CD4-positive, alpha-beta memory T cell (primary cell): ENCODE measurements at regions of chr7 and their contacts with region 1.

Region 1: GRCh38 chr7:99374103-99375064 is at the start of gene ARPC1B:
- DNase-seq: peak; percentile 81 to 88 (median 81)
- H3K4me3 ChIP-seq: peak within 1 kb of the TSS; percentile 73 to 82
- H3K4me3 Mint-ChIP-seq: peak within 1 kb of the TSS; percentile 79 to 87 (median 81)
- H3K27ac ChIP-seq: peak within 1 kb of the TSS; percentile 87
- H3K27ac Mint-ChIP-seq: peak within 1 kb of the TSS; percentile 87 to 100 (median 98)
- H3K4me1 ChIP-seq: peaks cover 44% of the 10 kb centered on the region
- H3K4me1 Mint-ChIP-seq: peaks cover 13 to 42% (median 25%) of the 10 kb centered on the region in 4 donors
- H3K27me3 ChIP-seq: no peaks in the 10 kb centered on the region
- H3K27me3 Mint-ChIP-seq: no peaks in the 10 kb centered on the region
- total RNA-seq, gene ARPC1B: 188 to 191 TPM

Region 2: DNA sequence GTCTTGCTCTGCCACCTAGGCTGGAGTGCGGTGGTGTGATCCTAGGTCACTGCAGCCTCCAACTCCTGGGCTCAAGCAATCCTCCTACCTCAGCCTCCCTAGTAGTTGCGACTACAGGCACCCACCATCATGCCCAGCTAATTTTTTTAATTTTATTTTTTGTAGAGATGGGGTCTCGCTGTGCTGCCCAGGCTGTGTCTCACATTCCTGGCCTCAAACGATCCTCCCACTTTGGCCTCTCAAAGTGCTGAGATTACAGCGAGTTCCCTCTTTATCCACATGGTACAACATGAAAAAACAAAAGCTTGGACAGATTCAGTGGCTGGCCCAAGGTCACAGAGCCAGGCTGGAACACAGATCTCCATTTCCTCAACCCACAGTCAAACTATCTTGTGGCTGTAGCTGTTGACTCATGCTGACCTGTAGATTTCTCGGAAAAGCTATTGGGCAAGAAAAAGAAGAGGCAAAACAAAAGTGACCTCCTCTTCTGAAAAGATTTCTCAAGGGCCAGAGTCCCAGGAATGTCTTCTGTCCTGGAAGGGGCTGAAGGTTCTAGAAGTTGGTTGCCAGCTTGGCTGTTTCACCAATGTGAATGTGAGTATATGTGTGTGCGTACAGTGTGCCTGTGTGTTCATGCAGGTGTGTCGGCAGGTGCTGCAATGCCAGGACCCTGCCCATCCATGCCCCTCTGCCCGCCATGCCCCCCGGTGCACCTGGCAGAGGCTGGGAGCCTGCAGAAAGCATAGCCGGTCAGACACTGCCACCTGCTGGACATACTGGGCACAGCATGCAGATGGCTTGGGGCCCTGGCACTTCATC is 533.0 kb before region 1 on chr7:
- CTCF ChIA-PET with region 1: no interaction called
- POLR2A ChIA-PET with region 1: no interaction called
- intact Hi-C with region 1: no loop called
- DNase-seq: peak; percentile 38 to 57 (median 46)
- H3K4me3 ChIP-seq: no peak overlapping the region
- H3K4me3 Mint-ChIP-seq: no peak overlapping the region
- H3K27ac ChIP-seq: no peak overlapping the region
- H3K27ac Mint-ChIP-seq: no peak overlapping the region
- H3K4me1 ChIP-seq: no peaks in the 10 kb centered on the region
- H3K4me1 Mint-ChIP-seq: peaks cover 0 to 5% (median 0%) of the 10 kb centered on the region in 4 donors
- H3K27me3 ChIP-seq: no peaks in the 10 kb centered on the region
- H3K27me3 Mint-ChIP-seq: peaks cover 2 to 8% of the 10 kb centered on the region in 2 donors

Region 3: DNA sequence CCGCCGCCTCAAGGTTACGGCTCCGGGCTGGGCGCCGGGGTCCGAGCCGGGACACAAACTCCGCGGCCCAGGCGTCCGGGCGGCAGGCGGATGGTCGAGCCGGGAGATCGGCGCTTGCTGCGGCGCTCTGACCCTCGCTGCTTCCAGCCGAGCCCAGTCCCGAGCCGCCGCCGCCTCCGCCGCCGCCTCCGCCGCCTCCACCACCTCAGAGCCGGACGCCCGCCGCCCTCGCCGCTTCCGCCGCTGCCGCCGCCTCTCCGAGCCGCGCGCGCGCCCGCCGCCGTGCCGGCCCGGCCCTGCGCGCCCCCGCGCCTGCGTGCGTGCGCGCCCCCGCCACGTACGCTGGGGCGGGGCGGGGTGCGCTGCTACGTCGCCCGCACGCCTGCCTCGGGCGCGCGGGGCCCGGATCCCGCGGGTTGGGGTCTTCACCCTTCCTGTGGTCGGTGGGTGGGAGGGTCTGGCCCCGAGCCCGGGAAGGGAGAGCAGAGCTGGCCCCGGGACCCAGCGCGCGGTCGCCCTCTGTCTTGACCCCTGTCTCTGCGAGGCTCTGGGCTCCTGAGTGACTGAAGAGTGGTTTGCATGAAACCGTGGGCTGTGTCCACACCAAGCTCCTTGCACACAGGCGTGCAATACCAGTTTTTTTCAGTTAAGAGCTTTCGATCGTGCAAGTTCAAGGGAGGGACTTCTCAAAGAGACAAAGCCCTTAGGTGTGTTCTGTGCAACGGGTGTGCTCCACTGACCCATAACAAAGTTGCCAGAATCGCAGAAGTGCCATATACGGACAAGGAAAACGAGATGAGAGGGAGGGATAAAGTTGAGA is 230.3 kb before region 1 on chr7 and contains the start of gene SMURF1:
- CTCF ChIA-PET with region 1: no interaction called
- POLR2A ChIA-PET with region 1: no interaction called
- intact Hi-C with region 1: loop called (anchors 5 kb)
- DNase-seq: peak; percentile 64 to 87 (median 77)
- H3K4me3 ChIP-seq: peak within 1 kb of the TSS; percentile 55 to 94
- H3K4me3 Mint-ChIP-seq: peak within 1 kb of the TSS; percentile 93 to 99 (median 96)
- H3K27ac ChIP-seq: peak within 1 kb of the TSS; percentile 80
- H3K27ac Mint-ChIP-seq: peak within 1 kb of the TSS; percentile 94 to 99 (median 97)
- H3K4me1 ChIP-seq: peaks cover 25% of the 10 kb centered on the region
- H3K4me1 Mint-ChIP-seq: peaks cover 20 to 52% (median 36%) of the 10 kb centered on the region in 4 donors
- H3K27me3 ChIP-seq: no peaks in the 10 kb centered on the region
- H3K27me3 Mint-ChIP-seq: no peaks in the 10 kb centered on the region
- total RNA-seq, gene SMURF1: 21.4 to 23.2 TPM

Region 4: GRCh38 chr7:99386584-99387238 is 12.3 kb after region 1 on chr7:
- CTCF ChIA-PET with region 1: interaction called, 7 read pairs
- POLR2A ChIA-PET with region 1: interaction called, 55 read pairs
- intact Hi-C with region 1: no loop called
- DNase-seq: peak; percentile 34 to 65 (median 47)
- H3K4me3 ChIP-seq: no peak overlapping the region
- H3K4me3 Mint-ChIP-seq: peak overlapping the region in 1 of 8 donors; percentile 59
- H3K27ac ChIP-seq: no peak overlapping the region
- H3K27ac Mint-ChIP-seq: peak overlapping the region; percentile 35 to 84 (median 75)
- H3K4me1 ChIP-seq: peaks cover 32% of the 10 kb centered on the region
- H3K4me1 Mint-ChIP-seq: peaks cover 4 to 40% (median 18%) of the 10 kb centered on the region in 4 donors
- H3K27me3 ChIP-seq: no peaks in the 10 kb centered on the region
- H3K27me3 Mint-ChIP-seq: no peaks in the 10 kb centered on the region

Region 5: DNA sequence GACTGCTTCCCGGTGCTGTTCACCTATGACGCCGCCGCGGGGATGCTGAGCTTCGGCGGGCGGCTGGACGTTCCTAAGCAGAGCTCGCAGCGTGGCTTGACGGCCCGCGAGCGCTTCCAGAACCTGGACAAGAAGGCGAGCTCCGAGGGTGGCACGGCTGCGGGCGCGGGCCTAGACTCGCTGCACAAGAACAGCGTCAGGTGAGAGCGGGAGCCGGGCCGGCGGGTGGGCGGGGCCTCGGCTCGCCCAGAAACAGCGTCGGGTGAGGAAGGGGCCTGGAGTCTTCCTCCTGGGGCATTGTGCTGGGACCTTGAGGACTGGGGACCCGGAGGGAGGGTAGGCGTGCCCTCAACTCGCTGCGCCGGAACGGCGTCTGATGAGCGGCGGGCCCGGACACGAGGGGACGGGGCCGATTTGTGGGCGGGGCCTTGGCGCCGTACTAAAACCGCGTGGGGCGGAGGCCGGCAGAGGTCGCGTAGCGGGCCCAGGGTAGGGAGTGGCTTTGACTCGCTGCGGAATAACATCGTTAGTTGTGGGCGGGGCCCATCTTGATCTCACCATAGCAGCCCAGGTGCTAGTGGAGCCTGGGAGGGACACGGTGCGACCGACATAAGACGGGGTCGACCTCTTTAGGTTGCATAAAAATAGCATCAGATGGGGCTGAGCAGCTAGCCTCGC is 18.4 kb after region 1 on chr7:
- CTCF ChIA-PET with region 1: interaction called, 5 read pairs
- POLR2A ChIA-PET with region 1: interaction called, 55 read pairs
- intact Hi-C with region 1: loop called (anchors 2 kb)
- DNase-seq: peak; percentile 85 to 92 (median 87)
- H3K4me3 ChIP-seq: peak overlapping the region in 1 of 2 donors; percentile 52
- H3K4me3 Mint-ChIP-seq: peak overlapping the region; percentile 80 to 91 (median 84)
- H3K27ac ChIP-seq: peak overlapping the region; percentile 60
- H3K27ac Mint-ChIP-seq: peak overlapping the region; percentile 92 to 97 (median 94)
- H3K4me1 ChIP-seq: peaks cover 22% of the 10 kb centered on the region
- H3K4me1 Mint-ChIP-seq: peaks cover 6 to 26% (median 18%) of the 10 kb centered on the region in 4 donors
- H3K27me3 ChIP-seq: no peaks in the 10 kb centered on the region
- H3K27me3 Mint-ChIP-seq: no peaks in the 10 kb centered on the region

Region 6: GRCh38 chr7:99438573-99439480 is 64.4 kb after region 1 on chr7 and contains the starts of genes CPSF4 and PTCD1:
- CTCF ChIA-PET with region 1: no interaction called
- POLR2A ChIA-PET with region 1: no interaction called
- intact Hi-C with region 1: loop called (anchors 2 kb)
- DNase-seq: peak; percentile 84 to 87 (median 84)
- H3K4me3 ChIP-seq: peak within 1 kb of the TSS; percentile 77 to 93
- H3K4me3 Mint-ChIP-seq: peak within 1 kb of the TSS; percentile 95 to 98 (median 97)
- H3K27ac ChIP-seq: peak within 1 kb of the TSS; percentile 61
- H3K27ac Mint-ChIP-seq: peak within 1 kb of the TSS; percentile 91 to 96 (median 95)
- H3K4me1 ChIP-seq: peaks cover 17% of the 10 kb centered on the region
- H3K4me1 Mint-ChIP-seq: peaks cover 15 to 40% (median 30%) of the 10 kb centered on the region in 4 donors
- H3K27me3 ChIP-seq: no peaks in the 10 kb centered on the region
- H3K27me3 Mint-ChIP-seq: no peaks in the 10 kb centered on the region
- total RNA-seq, gene CPSF4: 49.2 to 54.7 TPM
- total RNA-seq, gene PTCD1: 7.4 to 7.7 TPM